Thyroid gland (tissue), 4 donors: ENCODE measurements at regions of chr13 and their contacts with region 1.

Region 1: GRCh38 chr13:41652727-41653361 is 195.5 kb downstream of the RGCC start:
- DNase-seq: peak in 1 of 2 donors; percentile 32
- H3K4me3 ChIP-seq: no peak overlapping the region
- H3K27ac ChIP-seq: no peak overlapping the region
- H3K4me1 ChIP-seq: peaks cover 4 to 8% of the 10 kb centered on the region in 2 donors
- H3K27me3 ChIP-seq: no peaks in the 10 kb centered on the region
- CTCF ChIP-seq: peak in 5 of 6 experiments; percentile 27 to 69 (median 57)
- POLR2A ChIP-seq: no peak

Region 2: GRCh38 chr13:41352935-41353840 is 299.7 kb before region 1 on chr13:
- intact Hi-C with region 1: loop called (anchors 10 kb)
- DNase-seq: peak; percentile 7 to 11
- H3K4me3 ChIP-seq: no peak overlapping the region
- H3K27ac ChIP-seq: no peak overlapping the region
- H3K4me1 ChIP-seq: no peaks in the 10 kb centered on the region
- H3K27me3 ChIP-seq: no peaks in the 10 kb centered on the region
- CTCF ChIP-seq: peak; percentile 51 to 83 (median 77)
- POLR2A ChIP-seq: no peak

Region 3: GRCh38 chr13:41411522-41411921 is 241.3 kb before region 1 on chr13:
- intact Hi-C with region 1: loop called (anchors 10 kb)
- DNase-seq: peak in 1 of 2 donors; percentile 5
- H3K4me3 ChIP-seq: no peak overlapping the region
- H3K27ac ChIP-seq: no peak overlapping the region
- H3K4me1 ChIP-seq: no peaks in the 10 kb centered on the region
- H3K27me3 ChIP-seq: no peaks in the 10 kb centered on the region
- CTCF ChIP-seq: peak in 2 of 6 experiments; percentile 13 to 18
- POLR2A ChIP-seq: no peak